Activated B cell treated with CpG ODN at 0.5 μM for 24 hours (primary cell): ENCODE measurements at regions of chr17 and their contacts with region 1.

Region 1: GRCh38 chr17:45640141-45640850 is 143.8 kb upstream of the CRHR1 start:
- DNase-seq: peak; percentile 56
- ATAC-seq: peak; percentile 72
- H3K4me3 Mint-ChIP-seq: no peak overlapping the region
- H3K27ac Mint-ChIP-seq: no peak overlapping the region
- H3K4me1 Mint-ChIP-seq: peaks cover 5% of the 10 kb centered on the region
- H3K27me3 Mint-ChIP-seq: no peaks in the 10 kb centered on the region
- CTCF ChIP-seq: peak; percentile 85

Region 2: GRCh38 chr17:43734376-43734775 is 1905.9 kb before region 1 on chr17:
- CTCF ChIA-PET with region 1: no interaction called
- POLR2A ChIA-PET with region 1: no interaction called
- intact Hi-C with region 1: no loop called
- DNase-seq: no peak
- ATAC-seq: no peak
- H3K4me3 Mint-ChIP-seq: no peak overlapping the region
- H3K27ac Mint-ChIP-seq: no peak overlapping the region
- H3K4me1 Mint-ChIP-seq: no peaks in the 10 kb centered on the region
- H3K27me3 Mint-ChIP-seq: peaks cover 20% of the 10 kb centered on the region
- CTCF ChIP-seq: no peak

Region 3: DNA sequence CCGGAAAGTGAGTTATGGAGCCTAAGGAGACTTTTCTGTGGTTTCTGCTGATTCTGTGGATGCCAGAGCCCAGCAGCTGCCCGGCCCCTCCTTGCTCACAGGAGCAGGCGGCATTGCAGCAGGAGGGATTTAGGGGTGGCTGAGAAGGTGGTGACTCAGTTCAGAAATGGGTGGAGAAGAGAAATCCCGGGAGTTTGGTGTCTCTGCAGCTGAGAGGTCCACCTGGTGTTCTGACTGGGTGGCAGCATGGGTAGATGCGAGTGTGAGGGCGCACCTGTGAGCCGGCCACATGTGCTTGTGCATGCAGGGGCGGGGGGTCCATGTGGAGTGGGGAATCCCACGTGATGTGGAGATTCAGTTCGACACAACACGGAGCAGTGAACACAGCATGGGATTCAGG is 188.3 kb after region 1 on chr17:
- CTCF ChIA-PET with region 1: interaction called, 84 read pairs
- POLR2A ChIA-PET with region 1: no interaction called
- intact Hi-C with region 1: no loop called
- DNase-seq: no peak
- ATAC-seq: no peak
- H3K4me3 Mint-ChIP-seq: no peak overlapping the region
- H3K27ac Mint-ChIP-seq: no peak overlapping the region
- H3K4me1 Mint-ChIP-seq: no peaks in the 10 kb centered on the region
- H3K27me3 Mint-ChIP-seq: peaks cover 7% of the 10 kb centered on the region
- CTCF ChIP-seq: no peak

Region 4: DNA sequence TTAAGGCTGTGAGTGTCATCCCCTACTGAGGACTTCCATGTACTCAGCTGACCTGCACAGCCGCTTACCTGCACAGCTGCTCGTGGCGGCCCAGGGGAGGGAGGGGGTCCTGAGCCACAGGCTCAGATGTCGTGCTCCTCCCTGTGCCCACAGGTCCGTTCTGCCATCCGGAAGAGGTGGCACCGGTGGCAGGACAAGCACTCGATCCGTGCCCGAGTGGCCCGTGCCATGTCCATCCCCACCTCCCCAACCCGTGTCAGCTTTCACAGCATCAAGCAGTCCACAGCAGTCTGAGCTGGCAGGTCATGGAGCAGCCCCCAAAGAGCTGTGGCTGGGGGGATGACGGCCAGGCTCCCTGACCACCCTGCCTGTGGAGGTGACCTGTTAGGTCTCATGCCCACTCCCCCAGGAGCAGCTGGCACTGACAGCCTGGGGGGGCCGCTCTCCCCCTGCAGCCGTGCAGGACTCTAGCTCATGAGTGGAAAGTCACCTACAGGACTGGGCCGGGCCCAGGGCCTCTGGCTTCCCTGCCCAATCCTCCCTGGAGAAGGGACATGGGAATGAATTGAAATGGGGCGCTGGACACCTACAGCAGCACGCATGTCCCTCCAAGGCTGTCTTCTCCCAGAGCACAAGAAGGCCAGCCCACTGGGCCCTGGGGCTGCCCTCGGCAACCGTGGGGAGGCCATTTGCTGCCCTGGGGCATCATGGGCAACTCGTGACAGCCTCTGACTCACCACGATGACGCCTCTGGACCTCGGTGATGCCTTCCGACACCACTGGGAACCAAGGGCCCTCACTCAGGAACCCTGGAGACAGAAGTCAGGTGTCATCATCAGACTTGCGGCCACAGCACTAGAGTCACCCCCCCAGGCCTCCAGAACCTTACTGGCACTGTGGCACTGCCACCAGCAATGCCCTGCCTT is 194.4 kb after region 1 on chr17:
- CTCF ChIA-PET with region 1: interaction called, 84 read pairs
- POLR2A ChIA-PET with region 1: no interaction called
- intact Hi-C with region 1: no loop called
- DNase-seq: no peak
- ATAC-seq: no peak
- H3K4me3 Mint-ChIP-seq: no peak overlapping the region
- H3K27ac Mint-ChIP-seq: no peak overlapping the region
- H3K4me1 Mint-ChIP-seq: no peaks in the 10 kb centered on the region
- H3K27me3 Mint-ChIP-seq: peaks cover 3% of the 10 kb centered on the region
- CTCF ChIP-seq: no peak